Caco-2 (cell line): ENCODE measurements at regions of chr5 and their contacts with region 1.

Region 1: GRCh38 chr5:54492178-54492577 is 25.4 kb upstream of the SNX18 start:
- DNase-seq: no peak
- H3K4me3 ChIP-seq: no peak overlapping the region
- H3K4me3 Mint-ChIP-seq: no peak overlapping the region
- H3K27ac Mint-ChIP-seq: peak overlapping the region; percentile 19
- H3K4me1 ChIP-seq: peaks cover 8% of the 10 kb centered on the region
- H3K4me1 Mint-ChIP-seq: no peaks in the 10 kb centered on the region
- H3K27me3 ChIP-seq: no peaks in the 10 kb centered on the region
- H3K27me3 Mint-ChIP-seq: no peaks in the 10 kb centered on the region
- CTCF ChIP-seq: no peak

Region 2: DNA sequence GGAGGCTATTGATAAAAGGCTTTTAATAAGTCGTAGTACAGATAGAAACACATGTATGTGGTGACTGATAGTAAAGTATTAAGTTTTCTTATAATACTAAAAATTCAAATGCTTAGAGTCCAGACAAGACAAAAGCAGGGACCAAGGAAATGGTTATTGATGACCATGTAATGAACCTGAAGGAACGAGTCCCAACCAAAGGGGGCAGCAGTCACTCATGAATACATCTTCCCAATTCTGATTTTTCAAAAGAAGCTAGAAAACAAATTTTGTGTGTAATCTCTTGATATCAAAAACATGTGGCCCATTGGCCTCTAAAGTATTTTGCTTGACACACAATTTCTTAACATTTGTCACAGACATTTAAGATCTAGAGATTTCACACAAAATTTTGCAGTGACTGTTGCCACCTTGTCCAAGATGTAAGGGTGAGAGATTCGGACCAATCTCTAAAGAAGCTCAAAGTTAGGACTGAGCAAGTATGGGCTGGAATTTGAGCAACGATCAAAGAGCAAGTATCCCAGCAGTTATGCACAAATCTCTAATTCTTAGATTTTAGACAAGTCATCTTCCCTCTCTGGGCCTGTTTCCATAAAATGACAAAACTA is 248.6 kb before region 1 on chr5:
- CTCF ChIA-PET with region 1: interaction called, 19 read pairs
- POLR2A ChIA-PET with region 1: no interaction called
- intact Hi-C with region 1: loop called (anchors 1 kb)
- DNase-seq: peak in 1 of 2 experiments; percentile 62
- H3K4me3 ChIP-seq: no peak overlapping the region
- H3K4me3 Mint-ChIP-seq: no peak overlapping the region
- H3K27ac Mint-ChIP-seq: no peak overlapping the region
- H3K4me1 ChIP-seq: 0 out of 2 replicates have a peak, but pooled peaks cover 9% of the 10 kb centered on the region
- H3K4me1 Mint-ChIP-seq: peaks cover 10% of the 10 kb centered on the region
- H3K27me3 ChIP-seq: no peaks in the 10 kb centered on the region
- H3K27me3 Mint-ChIP-seq: no peaks in the 10 kb centered on the region
- CTCF ChIP-seq: peak; percentile 78 to 83

Region 3: DNA sequence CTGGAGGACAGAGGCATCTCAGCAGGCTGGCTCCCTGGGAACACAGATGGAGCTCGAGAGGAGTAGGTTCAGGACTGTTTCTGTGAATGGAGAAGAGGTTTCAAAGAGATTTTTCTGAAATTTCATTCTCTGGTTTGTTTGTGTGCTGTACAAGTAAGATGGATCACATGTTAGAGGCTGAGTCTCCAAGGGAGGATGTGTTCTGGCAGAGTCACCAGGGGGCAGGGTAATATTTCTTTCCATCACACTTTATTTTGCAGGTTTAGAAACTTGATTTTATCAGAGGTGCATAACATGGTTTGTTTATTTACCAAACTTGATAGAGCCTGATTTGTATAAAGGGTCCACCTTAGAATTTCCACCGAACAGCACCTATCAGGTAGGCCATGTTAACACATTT is 112.6 kb before region 1 on chr5:
- CTCF ChIA-PET with region 1: no interaction called
- POLR2A ChIA-PET with region 1: no interaction called
- intact Hi-C with region 1: loop called (anchors 1 kb)
- DNase-seq: no peak
- H3K4me3 ChIP-seq: no peak overlapping the region
- H3K4me3 Mint-ChIP-seq: no peak overlapping the region
- H3K27ac Mint-ChIP-seq: no peak overlapping the region
- H3K4me1 ChIP-seq: peaks cover 25% of the 10 kb centered on the region
- H3K4me1 Mint-ChIP-seq: peaks cover 18% of the 10 kb centered on the region
- H3K27me3 ChIP-seq: no peaks in the 10 kb centered on the region
- H3K27me3 Mint-ChIP-seq: no peaks in the 10 kb centered on the region
- CTCF ChIP-seq: no peak

Region 4: GRCh38 chr5:54385989-54386388 is 106.2 kb before region 1 on chr5:
- CTCF ChIA-PET with region 1: no interaction called
- POLR2A ChIA-PET with region 1: no interaction called
- intact Hi-C with region 1: loop called (anchors 2 kb)
- DNase-seq: no peak
- H3K4me3 ChIP-seq: no peak overlapping the region
- H3K4me3 Mint-ChIP-seq: no peak overlapping the region
- H3K27ac Mint-ChIP-seq: no peak overlapping the region
- H3K4me1 ChIP-seq: peaks cover 47% of the 10 kb centered on the region
- H3K4me1 Mint-ChIP-seq: peaks cover 26% of the 10 kb centered on the region
- H3K27me3 ChIP-seq: no peaks in the 10 kb centered on the region
- H3K27me3 Mint-ChIP-seq: no peaks in the 10 kb centered on the region
- CTCF ChIP-seq: no peak

Region 5: DNA sequence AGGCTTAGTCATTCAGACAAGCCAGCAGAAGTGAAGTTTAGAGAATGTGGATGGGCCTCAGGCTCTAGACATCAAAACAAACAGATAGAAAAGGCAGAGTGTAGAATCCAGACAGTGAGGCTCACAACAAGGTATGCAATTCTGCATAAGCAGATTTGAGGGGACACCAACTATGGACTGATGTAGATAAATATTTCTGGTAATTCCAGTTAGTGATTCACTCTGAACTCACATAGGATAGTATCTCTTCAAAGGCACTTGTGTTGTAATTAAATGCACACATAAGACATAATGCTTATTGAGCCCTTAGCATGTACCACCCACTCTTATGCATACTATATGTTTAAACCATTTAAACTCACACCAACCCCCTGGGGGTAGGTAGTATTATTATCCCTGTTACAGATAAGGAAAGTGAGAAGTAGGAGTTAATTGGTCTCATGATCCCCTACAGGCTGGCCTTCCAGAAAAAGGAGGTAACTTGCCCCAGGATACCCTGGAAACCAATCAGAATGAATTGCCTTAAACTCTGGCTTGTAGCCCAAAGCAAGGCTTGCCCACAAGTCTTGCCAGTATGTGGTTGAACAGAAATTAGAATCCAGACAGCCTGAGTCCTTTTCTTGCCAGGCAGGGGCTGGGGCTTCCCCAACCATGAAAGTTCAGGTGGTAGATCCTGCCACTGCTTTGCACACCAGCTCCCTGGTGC is 76.1 kb before region 1 on chr5:
- CTCF ChIA-PET with region 1: interaction called, 11 read pairs
- POLR2A ChIA-PET with region 1: no interaction called
- intact Hi-C with region 1: loop called (anchors 1 kb)
- DNase-seq: peak in 1 of 2 experiments; percentile 49
- H3K4me3 ChIP-seq: no peak overlapping the region
- H3K4me3 Mint-ChIP-seq: no peak overlapping the region
- H3K27ac Mint-ChIP-seq: peak overlapping the region; percentile 16
- H3K4me1 ChIP-seq: peaks cover 24% of the 10 kb centered on the region
- H3K4me1 Mint-ChIP-seq: peaks cover 39% of the 10 kb centered on the region
- H3K27me3 ChIP-seq: no peaks in the 10 kb centered on the region
- H3K27me3 Mint-ChIP-seq: no peaks in the 10 kb centered on the region
- CTCF ChIP-seq: no peak

Region 6: DNA sequence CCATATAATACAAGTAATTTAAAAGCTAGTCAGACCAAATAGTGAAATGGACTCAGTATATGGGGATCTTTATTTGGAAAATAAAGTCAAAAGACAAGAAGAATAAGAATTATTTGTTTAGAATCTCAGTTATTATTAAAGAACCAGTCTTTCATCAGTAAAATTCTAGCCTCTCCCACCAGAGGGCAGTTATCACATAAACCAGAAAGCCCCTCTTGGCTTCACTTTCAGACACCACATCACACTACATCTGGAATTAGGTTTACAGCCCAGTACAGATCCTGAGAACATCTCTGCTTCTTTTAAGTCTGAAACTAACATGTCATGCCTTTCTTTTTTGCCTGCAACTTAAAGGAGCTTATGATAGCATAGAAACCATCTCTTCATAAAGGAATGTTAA is 48.9 kb before region 1 on chr5:
- CTCF ChIA-PET with region 1: interaction called, 30 read pairs
- POLR2A ChIA-PET with region 1: interaction called, 15 read pairs
- intact Hi-C with region 1: loop called (anchors 1 kb)
- DNase-seq: peak in 1 of 2 experiments; percentile 57
- H3K4me3 ChIP-seq: no peak overlapping the region
- H3K4me3 Mint-ChIP-seq: no peak overlapping the region
- H3K27ac Mint-ChIP-seq: peak overlapping the region; percentile 56
- H3K4me1 ChIP-seq: peaks cover 91% of the 10 kb centered on the region
- H3K4me1 Mint-ChIP-seq: peaks cover 51% of the 10 kb centered on the region
- H3K27me3 ChIP-seq: no peaks in the 10 kb centered on the region
- H3K27me3 Mint-ChIP-seq: no peaks in the 10 kb centered on the region
- CTCF ChIP-seq: peak; percentile 50 to 51

Region 7: GRCh38 chr5:54457094-54457862 is 34.9 kb before region 1 on chr5:
- CTCF ChIA-PET with region 1: interaction called, 20 read pairs
- POLR2A ChIA-PET with region 1: no interaction called
- intact Hi-C with region 1: loop called (anchors 1 kb)
- DNase-seq: peak; percentile 89 to 96
- H3K4me3 ChIP-seq: no peak overlapping the region
- H3K4me3 Mint-ChIP-seq: peak overlapping the region; percentile 55
- H3K27ac Mint-ChIP-seq: peak overlapping the region; percentile 94
- H3K4me1 ChIP-seq: peaks cover 39% of the 10 kb centered on the region
- H3K4me1 Mint-ChIP-seq: peaks cover 22% of the 10 kb centered on the region
- H3K27me3 ChIP-seq: no peaks in the 10 kb centered on the region
- H3K27me3 Mint-ChIP-seq: no peaks in the 10 kb centered on the region
- CTCF ChIP-seq: no peak